ENCODE measurements at regions of chr4 and their contacts with region 1.

Region 1: GRCh38 chr4:56958111-56958517 is 19.3 kb downstream of the NOA1 start:
- DNase-seq: peak; percentile 68 to 91
- ATAC-seq: peak; percentile 99 to 100
- H3K4me3 ChIP-seq: peak overlapping the region; percentile 0 to 24 (median 17)
- H3K27ac ChIP-seq: peak overlapping the region; percentile 27 to 69 (median 64)
- H3K4me1 ChIP-seq: peaks cover 6 to 7% of the 10 kb centered on the region in 2 donors
- H3K27me3 ChIP-seq: no peaks in the 10 kb centered on the region
- CTCF ChIP-seq: no peak
- POLR2A ChIP-seq: no peak

Region 2: DNA sequence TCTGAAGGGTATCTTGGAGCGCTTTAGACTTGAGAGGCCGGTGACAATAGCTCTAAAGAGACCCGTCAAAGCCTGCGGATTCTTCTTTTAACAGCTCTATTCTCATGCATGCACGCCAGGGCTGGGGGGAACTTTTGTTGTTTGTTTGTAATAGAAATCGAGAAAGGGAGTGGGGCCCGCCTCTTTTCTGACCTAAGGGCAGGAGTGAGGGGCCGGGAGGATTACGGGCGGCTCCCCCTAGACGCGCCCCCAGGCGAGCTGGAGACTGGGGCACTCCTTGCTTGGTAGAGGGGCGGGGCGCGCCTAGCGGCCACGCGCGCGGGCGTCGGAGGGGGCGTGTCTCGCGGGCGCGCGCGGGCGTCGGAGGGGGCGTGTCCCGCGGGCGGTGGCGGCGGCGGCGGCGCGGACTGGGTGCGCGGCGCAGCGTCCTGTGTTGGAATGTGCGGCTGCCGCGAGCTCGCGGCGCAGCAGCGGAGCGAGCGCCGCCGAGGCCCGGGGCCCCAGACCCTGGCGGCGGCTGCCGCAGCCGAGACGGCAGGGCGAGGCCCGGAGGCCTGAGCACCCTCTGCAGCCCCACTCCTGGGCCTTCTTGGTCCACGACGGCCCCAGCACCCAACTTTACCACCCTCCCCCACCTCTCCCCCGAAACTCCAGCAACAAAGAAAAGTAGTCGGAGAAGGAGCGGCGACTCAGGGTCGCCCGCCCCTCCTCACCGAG is 50.5 kb before region 1 on chr4 and contains the start of gene REST:
- in situ Hi-C with region 1: no loop called
- intact Hi-C with region 1: loop called (anchors 5 kb)
- DNase-seq: peak; percentile 41 to 61
- ATAC-seq: peak; percentile 77 to 78
- H3K4me3 ChIP-seq: peak within 1 kb of the TSS; percentile 61 to 98 (median 90)
- H3K27ac ChIP-seq: peak within 1 kb of the TSS; percentile 85 to 94 (median 89)
- H3K4me1 ChIP-seq: peaks cover 12 to 16% of the 10 kb centered on the region in 2 donors
- H3K27me3 ChIP-seq: no peaks in the 10 kb centered on the region
- CTCF ChIP-seq: no peak
- POLR2A ChIP-seq: peak; percentile 69 to 73
- total RNA-seq, gene REST: 17.9 to 22.6 (median 20.0) TPM